ENCODE measurements at regions of chr7 and their contacts with region 1.

Region 1: DNA sequence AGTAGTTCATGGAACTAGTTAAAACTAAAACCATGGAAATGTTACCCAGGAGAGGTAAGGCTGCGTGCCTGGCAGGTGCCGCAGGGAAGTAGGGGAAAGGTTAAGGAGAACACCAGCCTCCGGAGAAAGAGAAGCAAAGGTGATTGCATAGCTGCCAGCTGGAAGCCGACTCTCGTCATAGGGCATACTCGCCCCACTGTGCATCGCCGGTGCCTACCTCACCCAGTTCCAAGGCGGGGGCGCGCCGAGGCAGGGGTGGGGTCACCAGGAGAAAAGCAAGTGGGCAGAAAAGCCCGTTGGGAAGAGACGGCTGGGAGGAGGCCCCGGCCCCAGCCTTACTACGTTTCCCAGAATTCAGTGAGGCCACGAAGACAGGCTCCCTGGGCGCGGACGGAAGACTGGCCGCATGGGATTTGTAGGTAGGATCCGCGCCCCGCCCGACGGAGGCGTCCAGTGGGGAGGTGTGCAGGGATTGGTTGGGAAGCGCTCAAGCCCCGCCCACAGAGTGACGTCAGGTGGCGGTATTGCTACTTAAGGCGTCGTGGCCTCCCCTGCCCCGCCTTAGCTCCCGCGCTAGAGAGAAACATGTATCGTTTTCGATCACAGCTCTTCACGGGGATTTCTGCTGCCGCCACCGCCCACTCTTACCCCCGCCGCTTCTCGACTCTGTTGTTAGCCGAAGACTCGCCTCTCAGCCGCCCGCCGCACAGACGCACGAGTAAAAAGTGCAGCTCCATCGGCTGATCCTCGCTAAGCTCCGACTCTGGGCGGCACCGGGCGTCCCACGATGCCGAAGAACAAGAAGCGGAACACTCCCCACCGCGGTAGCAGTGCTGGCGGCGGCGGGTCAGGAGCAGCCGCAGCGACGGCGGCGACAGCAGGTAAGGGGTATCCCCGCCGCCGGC is at the start of gene IFRD1:
- DNase-seq: peak; percentile 99
- ATAC-seq: peak; percentile 78
- H3K4me3 Mint-ChIP-seq: peak within 1 kb of the TSS; percentile 97
- H3K27ac Mint-ChIP-seq: peak within 1 kb of the TSS; percentile 98
- H3K4me1 Mint-ChIP-seq: peaks cover 38% of the 10 kb centered on the region
- H3K27me3 Mint-ChIP-seq: no peaks in the 10 kb centered on the region
- total RNA-seq, gene IFRD1: 40.3 to 48.9 TPM

Region 2: GRCh38 chr7:111012799-111013675 is 1437.1 kb before region 1 on chr7:
- CTCF ChIA-PET with region 1: no interaction called
- POLR2A ChIA-PET with region 1: no interaction called
- intact Hi-C with region 1: loop called in 1 of 2 experiments (anchors 2 kb)
- DNase-seq: peak; percentile 57
- ATAC-seq: peak; percentile 81
- H3K4me3 Mint-ChIP-seq: peak overlapping the region; percentile 53
- H3K27ac Mint-ChIP-seq: peak overlapping the region; percentile 85
- H3K4me1 Mint-ChIP-seq: peaks cover 70% of the 10 kb centered on the region
- H3K27me3 Mint-ChIP-seq: no peaks in the 10 kb centered on the region

Region 3: GRCh38 chr7:111089822-111090426 is 1360.2 kb before region 1 on chr7:
- CTCF ChIA-PET with region 1: no interaction called
- POLR2A ChIA-PET with region 1: no interaction called
- intact Hi-C with region 1: loop called in 1 of 2 experiments (anchors 5 kb)
- DNase-seq: no peak
- ATAC-seq: no peak
- H3K4me3 Mint-ChIP-seq: no peak overlapping the region
- H3K27ac Mint-ChIP-seq: peak overlapping the region; percentile 80
- H3K4me1 Mint-ChIP-seq: peaks cover 86% of the 10 kb centered on the region
- H3K27me3 Mint-ChIP-seq: no peaks in the 10 kb centered on the region

Region 4: DNA sequence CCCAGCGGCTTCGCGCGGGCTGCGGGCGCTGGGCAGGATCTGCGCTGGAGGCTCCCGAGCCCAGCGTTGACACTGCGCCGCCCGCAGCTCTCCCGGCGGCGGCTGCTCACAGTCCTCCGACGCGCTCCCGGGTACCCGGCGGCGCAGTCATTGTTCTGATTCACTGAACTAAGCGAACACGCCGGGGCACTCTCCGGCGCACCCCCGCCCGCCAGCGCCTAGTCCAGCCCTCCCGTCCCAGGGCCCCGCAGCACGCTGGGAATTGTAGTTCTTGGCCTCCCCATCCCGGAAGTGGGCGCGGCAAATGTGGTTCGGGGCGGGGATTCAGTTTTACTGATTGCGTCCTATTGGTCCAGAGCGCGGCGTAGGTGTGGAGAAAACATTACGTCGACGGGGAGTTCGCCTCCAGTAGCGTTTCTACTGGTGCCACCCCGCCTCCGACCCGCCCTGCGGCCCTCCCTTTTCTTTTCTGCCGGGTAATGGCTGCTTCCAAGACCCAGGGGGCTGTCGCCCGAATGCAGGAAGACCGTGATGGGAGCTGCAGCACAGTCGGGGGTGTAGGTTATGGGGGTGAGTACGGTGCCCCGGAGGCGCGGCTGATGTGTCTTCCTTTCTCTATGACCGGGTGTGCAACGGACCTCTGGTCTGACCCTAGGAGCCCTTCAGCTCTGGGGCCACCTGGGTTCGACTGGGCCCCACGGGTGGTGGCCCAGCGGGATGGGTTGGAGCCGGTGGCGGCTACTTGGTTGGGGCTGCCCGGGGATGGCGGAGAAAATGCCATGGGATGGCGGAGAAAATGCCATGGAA is 243.7 kb before region 1 on chr7 and contains the starts of genes DOCK4 and ZNF277:
- CTCF ChIA-PET with region 1: interaction called, 3 read pairs
- POLR2A ChIA-PET with region 1: interaction called, 23 read pairs
- intact Hi-C with region 1: loop called (anchors 1 kb)
- DNase-seq: peak; percentile 100
- ATAC-seq: peak; percentile 94
- H3K4me3 Mint-ChIP-seq: peak within 1 kb of the TSS; percentile 92
- H3K27ac Mint-ChIP-seq: peak within 1 kb of the TSS; percentile 84
- H3K4me1 Mint-ChIP-seq: peaks cover 34% of the 10 kb centered on the region
- H3K27me3 Mint-ChIP-seq: peaks cover 30% of the 10 kb centered on the region
- total RNA-seq, gene DOCK4: 0.32 TPM
- total RNA-seq, gene ZNF277: 17.6 to 21.4 TPM

Region 5: DNA sequence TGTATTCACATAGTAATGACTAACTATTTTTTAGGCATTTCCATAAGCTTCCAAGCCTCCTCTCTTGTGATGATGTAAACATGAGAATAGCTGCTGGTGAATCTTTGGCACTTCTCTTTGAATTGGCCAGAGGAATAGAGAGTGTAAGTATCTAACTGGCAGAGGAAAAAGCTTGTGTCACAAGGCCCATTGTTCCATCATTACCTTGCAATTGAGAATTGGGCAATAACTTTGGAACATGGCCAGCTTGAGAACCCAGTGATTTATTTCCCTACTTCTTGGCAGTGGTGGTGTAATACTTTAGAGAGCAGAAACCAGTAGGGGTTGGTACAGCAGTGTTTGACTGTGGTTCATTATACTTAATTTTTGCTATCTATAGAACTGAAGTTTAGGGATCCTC is 12.1 kb after region 1 on chr7:
- CTCF ChIA-PET with region 1: interaction called, 18 read pairs
- POLR2A ChIA-PET with region 1: interaction called, 28 read pairs
- intact Hi-C with region 1: no loop called
- DNase-seq: no peak
- ATAC-seq: no peak
- H3K4me3 Mint-ChIP-seq: no peak overlapping the region
- H3K27ac Mint-ChIP-seq: no peak overlapping the region
- H3K4me1 Mint-ChIP-seq: no peaks in the 10 kb centered on the region
- H3K27me3 Mint-ChIP-seq: no peaks in the 10 kb centered on the region

Region 6: GRCh38 chr7:112789817-112790585 is 339.8 kb after region 1 on chr7 and contains the start of gene TMEM168:
- CTCF ChIA-PET with region 1: no interaction called
- POLR2A ChIA-PET with region 1: interaction called, 4 read pairs
- intact Hi-C with region 1: loop called (anchors 1 kb)
- DNase-seq: peak; percentile 93
- ATAC-seq: peak; percentile 85
- H3K4me3 Mint-ChIP-seq: peak within 1 kb of the TSS; percentile 86
- H3K27ac Mint-ChIP-seq: peak within 1 kb of the TSS; percentile 96
- H3K4me1 Mint-ChIP-seq: peaks cover 44% of the 10 kb centered on the region
- H3K27me3 Mint-ChIP-seq: no peaks in the 10 kb centered on the region
- total RNA-seq, gene TMEM168: 16.7 to 18.3 TPM

Region 7: GRCh38 chr7:113118074-113118959 is 668.2 kb after region 1 on chr7 and contains the start of gene SMIM30:
- CTCF ChIA-PET with region 1: no interaction called
- POLR2A ChIA-PET with region 1: no interaction called
- intact Hi-C with region 1: loop called (anchors 1 to 2 kb)
- DNase-seq: peak; percentile 93
- ATAC-seq: peak; percentile 95
- H3K4me3 Mint-ChIP-seq: peak within 1 kb of the TSS; percentile 80
- H3K27ac Mint-ChIP-seq: peak within 1 kb of the TSS; percentile 82
- H3K4me1 Mint-ChIP-seq: peaks cover 34% of the 10 kb centered on the region
- H3K27me3 Mint-ChIP-seq: no peaks in the 10 kb centered on the region
- total RNA-seq, gene SMIM30: 36.0 to 38.5 TPM

Measured in activated CD4-positive, alpha-beta T cell treated with anti-CD3 and anti-CD28 coated beads for 36 hours (primary cell).